ENCODE measurements at regions of chr14 and their contacts with region 1.

Region 1: DNA sequence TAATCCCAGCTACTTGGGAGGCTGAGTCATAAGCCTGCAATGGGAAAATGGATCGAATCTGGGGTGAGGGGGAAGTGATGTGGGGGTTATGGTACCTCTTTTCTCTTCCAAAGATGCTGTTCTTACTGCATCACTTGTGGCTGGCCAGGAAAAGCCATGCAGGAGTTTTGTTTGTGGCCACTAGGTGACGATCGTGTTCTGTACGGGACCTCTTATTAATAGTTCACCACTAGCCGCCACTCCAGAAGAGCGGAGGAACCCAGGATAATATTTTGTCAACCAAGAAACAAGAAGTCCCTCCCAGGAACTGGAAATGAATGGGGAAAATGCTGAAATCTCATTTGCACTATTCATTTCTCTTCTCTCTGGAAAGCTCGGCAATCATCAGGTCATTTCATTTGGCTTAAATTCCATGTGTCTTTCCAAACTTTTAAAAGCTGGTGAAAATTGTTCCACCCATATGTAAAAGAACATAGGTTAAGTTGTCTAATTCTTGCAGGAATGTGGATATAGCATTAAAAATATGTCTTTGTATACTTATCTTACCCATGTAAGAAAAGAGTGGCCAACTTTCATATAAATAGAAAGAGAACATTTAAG is 8.9 kb downstream of the GPR65 start:
- DNase-seq: peak; percentile 84
- ATAC-seq: peak; percentile 91
- H3K4me3 ChIP-seq: no peak overlapping the region
- H3K27ac ChIP-seq: no peak overlapping the region
- H3K4me1 ChIP-seq: no peaks in the 10 kb centered on the region; the same call in 1 of the 2 replicates
- H3K27me3 ChIP-seq: no peaks in the 10 kb centered on the region
- CTCF ChIP-seq: peak; percentile 92

Region 2: DNA sequence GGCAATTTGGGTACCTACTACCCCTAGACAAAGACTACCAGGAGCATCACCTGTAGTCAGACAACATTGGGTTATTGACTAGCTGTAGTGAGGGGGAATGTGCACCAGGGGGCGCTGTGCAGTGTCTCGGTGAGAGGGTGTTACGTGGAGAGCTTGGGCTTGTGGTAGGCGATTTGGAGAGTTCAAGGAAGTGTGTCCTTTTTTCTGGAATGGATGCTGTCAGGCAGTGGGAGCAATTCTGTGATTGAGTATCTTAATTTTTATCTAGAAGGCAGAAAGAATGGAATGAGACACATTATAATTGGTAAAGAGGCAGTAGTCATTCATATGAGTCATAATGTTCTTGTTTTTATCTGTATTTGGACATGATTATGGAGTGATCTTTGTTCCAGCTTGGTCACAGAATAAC is 208.5 kb before region 1 on chr14:
- CTCF ChIA-PET with region 1: no interaction called
- POLR2A ChIA-PET with region 1: no interaction called
- intact Hi-C with region 1: no loop called
- DNase-seq: peak; percentile 22
- ATAC-seq: no peak
- H3K4me3 ChIP-seq: no peak overlapping the region
- H3K27ac ChIP-seq: no peak overlapping the region
- H3K4me1 ChIP-seq: no peaks in the 10 kb centered on the region
- H3K27me3 ChIP-seq: no peaks in the 10 kb centered on the region
- CTCF ChIP-seq: peak; percentile 60

Region 3: GRCh38 chr14:87816416-87816815 is 197.4 kb before region 1 on chr14:
- CTCF ChIA-PET with region 1: no interaction called
- POLR2A ChIA-PET with region 1: no interaction called
- intact Hi-C with region 1: no loop called
- DNase-seq: no peak
- ATAC-seq: no peak
- H3K4me3 ChIP-seq: no peak overlapping the region
- H3K27ac ChIP-seq: no peak overlapping the region
- H3K4me1 ChIP-seq: no peaks in the 10 kb centered on the region
- H3K27me3 ChIP-seq: peaks cover 29% of the 10 kb centered on the region
- CTCF ChIP-seq: no peak

Region 4: DNA sequence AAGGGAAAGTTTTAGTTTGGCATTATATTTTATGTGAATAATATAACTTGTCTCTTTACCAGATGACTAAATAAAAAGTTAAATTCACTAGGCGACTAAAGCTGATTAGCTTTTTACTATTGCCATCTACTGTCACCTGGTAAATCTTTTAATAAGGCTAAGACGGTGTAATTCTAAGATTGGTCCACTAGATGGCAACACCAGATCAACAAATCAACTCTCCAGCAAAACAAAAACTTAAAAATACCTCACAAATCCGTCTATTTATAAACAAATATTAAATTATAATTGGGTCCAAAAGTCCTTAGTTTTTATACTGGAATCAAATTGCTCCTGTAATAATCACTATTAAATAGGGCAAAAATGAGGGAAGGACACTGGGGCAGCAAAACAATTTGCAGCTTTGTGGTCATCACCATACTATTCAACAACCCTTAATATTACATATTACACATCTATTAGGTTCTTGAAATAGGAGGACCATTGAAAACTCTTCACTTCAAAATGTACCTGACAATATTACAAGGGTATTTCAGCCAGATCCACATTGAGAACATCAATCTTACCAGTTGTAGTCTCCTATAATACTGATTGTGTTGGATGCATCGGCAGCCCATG is 68.8 kb before region 1 on chr14:
- CTCF ChIA-PET with region 1: no interaction called
- POLR2A ChIA-PET with region 1: no interaction called
- intact Hi-C with region 1: loop called (anchors 2 kb)
- DNase-seq: peak; percentile 66
- ATAC-seq: no peak
- H3K4me3 ChIP-seq: no peak overlapping the region
- H3K27ac ChIP-seq: no peak overlapping the region
- H3K4me1 ChIP-seq: no peaks in the 10 kb centered on the region
- H3K27me3 ChIP-seq: no peaks in the 10 kb centered on the region
- CTCF ChIP-seq: peak; percentile 74

Region 5: DNA sequence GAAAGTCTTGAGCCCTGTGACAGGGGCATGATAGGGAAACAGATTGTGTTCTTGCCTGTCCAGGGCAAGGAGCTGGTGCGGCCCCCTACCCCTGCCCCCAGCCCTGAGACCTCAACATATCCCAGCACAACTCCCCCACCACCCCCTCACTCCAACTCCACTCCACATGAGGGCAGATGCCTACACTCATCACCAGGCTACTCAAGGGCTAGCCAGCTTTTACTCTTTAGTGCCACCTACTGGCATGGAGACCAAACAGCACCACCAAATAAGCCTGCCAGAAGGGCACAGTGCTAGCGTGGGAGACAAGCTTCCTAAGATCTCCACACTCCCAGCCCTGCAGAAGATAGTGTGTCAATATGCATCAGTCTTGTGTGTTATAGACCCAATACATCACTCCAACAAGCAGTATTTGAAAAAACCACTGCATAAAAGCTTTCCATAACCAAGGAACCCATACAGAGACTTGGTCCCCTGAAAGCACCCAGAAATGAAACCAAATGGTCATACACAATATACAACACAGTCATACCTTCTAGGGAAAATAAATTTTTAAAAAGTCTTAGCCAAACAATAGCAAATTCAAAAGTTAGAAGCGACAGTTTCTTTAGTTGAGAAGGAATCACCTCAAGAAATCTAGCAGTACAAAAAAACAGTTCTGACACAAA is 154.8 kb after region 1 on chr14:
- CTCF ChIA-PET with region 1: interaction called, 3 read pairs
- POLR2A ChIA-PET with region 1: no interaction called
- intact Hi-C with region 1: loop called (anchors 2 kb)
- DNase-seq: peak; percentile 61
- ATAC-seq: peak; percentile 55; the same call in 1 of the 2 replicates
- H3K4me3 ChIP-seq: no peak overlapping the region
- H3K27ac ChIP-seq: no peak overlapping the region
- H3K4me1 ChIP-seq: peaks cover 12% of the 10 kb centered on the region
- H3K27me3 ChIP-seq: no peaks in the 10 kb centered on the region
- CTCF ChIP-seq: peak; percentile 84

Region 6: DNA sequence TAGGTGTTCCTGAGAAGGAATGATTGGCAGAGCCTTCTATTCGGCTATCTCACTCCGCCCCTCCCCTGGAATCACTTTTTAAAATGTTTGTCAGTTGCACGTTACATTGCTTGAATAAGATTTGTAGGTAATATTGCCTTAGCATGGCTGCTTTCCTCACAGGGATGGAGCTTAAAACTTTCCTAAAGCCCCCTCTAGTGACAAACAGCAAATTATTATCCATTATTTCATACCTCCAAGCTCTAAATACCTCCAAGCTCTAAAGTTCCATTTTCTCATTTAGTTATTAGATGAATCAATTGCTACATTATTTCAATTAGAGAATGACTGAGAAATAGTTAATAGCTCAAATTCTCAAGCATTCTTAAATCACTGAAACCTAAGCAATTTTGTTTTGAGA is 366.6 kb after region 1 on chr14:
- CTCF ChIA-PET with region 1: interaction called, 3 read pairs
- POLR2A ChIA-PET with region 1: no interaction called
- intact Hi-C with region 1: loop called (anchors 1 kb)
- DNase-seq: peak; percentile 61
- ATAC-seq: peak; percentile 63
- H3K4me3 ChIP-seq: no peak overlapping the region
- H3K27ac ChIP-seq: no peak overlapping the region
- H3K4me1 ChIP-seq: peaks cover 9% of the 10 kb centered on the region; the same call in 1 of the 2 replicates
- H3K27me3 ChIP-seq: no peaks in the 10 kb centered on the region
- CTCF ChIP-seq: peak; percentile 73

Region 7: GRCh38 chr14:88463318-88463717 is 449.5 kb after region 1 on chr14:
- CTCF ChIA-PET with region 1: no interaction called
- POLR2A ChIA-PET with region 1: no interaction called
- intact Hi-C with region 1: loop called (anchors 10 kb)
- DNase-seq: peak; percentile 64
- ATAC-seq: peak; percentile 55
- H3K4me3 ChIP-seq: no peak overlapping the region
- H3K27ac ChIP-seq: no peak overlapping the region
- H3K4me1 ChIP-seq: peaks cover 7% of the 10 kb centered on the region
- H3K27me3 ChIP-seq: no peaks in the 10 kb centered on the region
- CTCF ChIP-seq: peak; percentile 68

Measured in PC-3 (cell line).